ENCODE measurements at regions of chr1 and their contacts with region 1.

Region 1: DNA sequence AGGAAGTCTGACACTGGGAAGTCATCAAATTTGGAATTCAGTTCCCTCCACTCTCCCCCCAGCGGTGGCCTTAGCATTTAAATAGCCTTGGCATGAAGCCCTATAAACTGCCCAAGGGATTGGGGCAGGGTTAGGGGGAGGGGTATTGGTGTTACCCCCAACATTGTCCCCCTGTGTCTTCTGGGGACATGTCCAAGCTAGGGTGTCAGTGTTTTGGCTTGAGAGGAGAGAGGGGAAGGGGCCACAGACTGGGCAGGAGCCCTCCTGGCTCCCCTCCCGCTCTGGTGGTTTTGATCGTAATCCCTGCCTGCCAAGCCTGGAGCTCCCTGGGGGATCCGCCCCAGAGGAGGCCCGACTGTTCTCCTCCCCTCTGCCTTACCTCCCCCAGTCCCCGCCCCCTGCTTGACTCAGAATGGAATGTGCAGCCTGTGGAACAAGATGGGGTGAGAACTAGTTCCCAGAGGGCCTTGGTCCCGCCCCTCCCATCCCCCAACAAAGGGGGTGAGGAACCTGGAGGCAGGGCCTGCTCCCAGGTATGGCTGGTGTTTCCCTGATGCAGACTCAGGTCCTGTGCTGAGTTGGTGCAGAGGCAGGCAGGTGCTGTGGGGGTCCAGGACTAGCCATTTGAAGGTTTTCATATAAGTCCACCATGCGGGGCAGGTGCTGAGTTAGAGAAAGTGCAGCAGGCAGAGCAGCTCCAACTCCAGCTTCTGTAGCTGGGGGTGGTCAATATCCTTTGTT is 7.4 kb downstream of the SOX13 start:
- DNase-seq: peak; percentile 76
- ATAC-seq: peak; percentile 58
- H3K4me3 ChIP-seq: peak overlapping the region in 1 of 3 experiments; percentile 23; a peak in 2 of 6 replicates
- H3K27ac ChIP-seq: peak overlapping the region; percentile 36
- H3K4me1 ChIP-seq: peaks cover 94% of the 10 kb centered on the region
- H3K27me3 ChIP-seq: no peaks in the 10 kb centered on the region
- CTCF ChIP-seq: no peak
- EP300 ChIP-seq: no peak
- POLR2A ChIP-seq: no peak
- RAD21 ChIP-seq: no peak

Region 2: GRCh38 chr1:203612932-203613682 is 467.2 kb before region 1 on chr1:
- CTCF ChIA-PET with region 1: no interaction called
- POLR2A ChIA-PET with region 1: no interaction called
- in situ Hi-C with region 1: no loop called
- intact Hi-C with region 1: no loop called
- DNase-seq: no peak
- ATAC-seq: no peak
- H3K4me3 ChIP-seq: no peak overlapping the region
- H3K27ac ChIP-seq: no peak overlapping the region
- H3K4me1 ChIP-seq: no peaks in the 10 kb centered on the region
- H3K27me3 ChIP-seq: peaks cover 0 to 6% of the 10 kb centered on the region in 2 experiments; a peak in 2 of 5 replicates
- CTCF ChIP-seq: no peak
- EP300 ChIP-seq: no peak
- POLR2A ChIP-seq: no peak
- RAD21 ChIP-seq: no peak

Region 3: DNA sequence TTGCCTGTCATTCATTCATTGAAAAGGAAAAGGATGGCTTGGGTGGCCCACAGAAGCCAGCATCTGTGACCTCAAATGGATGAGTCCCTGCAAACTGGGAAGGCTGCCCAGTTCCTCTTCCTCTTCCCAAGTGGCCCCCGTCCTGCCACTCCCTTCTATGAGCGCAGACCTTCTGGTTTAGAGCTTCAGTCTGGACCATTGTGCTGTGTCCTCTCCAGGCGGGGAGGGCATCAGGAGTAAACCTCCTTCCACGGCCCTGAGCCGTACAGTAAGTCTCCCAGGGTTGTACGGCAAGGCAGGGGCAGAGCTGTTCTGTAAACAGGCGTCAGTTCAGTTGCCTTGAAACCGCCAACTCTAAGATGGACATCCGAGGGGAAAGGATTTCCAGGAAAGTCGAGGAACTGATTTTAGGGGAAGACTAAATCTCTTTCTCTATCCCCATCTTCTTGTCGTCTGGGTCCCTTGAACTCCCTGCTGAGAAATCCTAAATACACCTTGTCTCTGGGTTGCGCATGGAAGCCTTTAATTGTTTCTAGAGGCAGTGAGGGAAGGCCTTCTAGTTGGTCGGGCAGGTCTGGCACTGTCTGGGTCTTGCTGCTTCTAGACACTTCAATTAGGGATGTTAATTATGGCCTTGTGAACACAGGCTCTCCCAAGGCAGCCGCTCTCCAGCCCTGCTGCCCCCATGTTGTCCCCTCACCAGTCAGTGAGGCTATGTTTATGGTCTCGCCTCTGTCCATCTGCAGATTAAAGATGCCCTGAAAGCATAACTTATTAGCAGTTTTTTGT is 14.7 kb after region 1 on chr1:
- CTCF ChIA-PET with region 1: no interaction called
- POLR2A ChIA-PET with region 1: interaction called, 15 read pairs
- in situ Hi-C with region 1: no loop called
- intact Hi-C with region 1: loop called (anchors 2 kb)
- DNase-seq: no peak
- ATAC-seq: no peak
- H3K4me3 ChIP-seq: no peak overlapping the region
- H3K27ac ChIP-seq: no peak overlapping the region
- H3K4me1 ChIP-seq: peaks cover 88% of the 10 kb centered on the region
- H3K27me3 ChIP-seq: no peaks in the 10 kb centered on the region
- CTCF ChIP-seq: no peak
- EP300 ChIP-seq: no peak
- POLR2A ChIP-seq: no peak
- RAD21 ChIP-seq: no peak

Region 4: GRCh38 chr1:204104133-204104871 is 24.0 kb after region 1 on chr1:
- CTCF ChIA-PET with region 1: no interaction called
- POLR2A ChIA-PET with region 1: interaction called, 20 read pairs
- in situ Hi-C with region 1: no loop called
- intact Hi-C with region 1: no loop called
- DNase-seq: no peak
- ATAC-seq: no peak
- H3K4me3 ChIP-seq: no peak overlapping the region
- H3K27ac ChIP-seq: peak overlapping the region; percentile 9
- H3K4me1 ChIP-seq: peaks cover 68% of the 10 kb centered on the region
- H3K27me3 ChIP-seq: no peaks in the 10 kb centered on the region
- CTCF ChIP-seq: no peak
- EP300 ChIP-seq: no peak
- POLR2A ChIP-seq: no peak
- RAD21 ChIP-seq: no peak